ENCODE measurements at regions of chr11 and their contacts with region 1.

Region 1: DNA sequence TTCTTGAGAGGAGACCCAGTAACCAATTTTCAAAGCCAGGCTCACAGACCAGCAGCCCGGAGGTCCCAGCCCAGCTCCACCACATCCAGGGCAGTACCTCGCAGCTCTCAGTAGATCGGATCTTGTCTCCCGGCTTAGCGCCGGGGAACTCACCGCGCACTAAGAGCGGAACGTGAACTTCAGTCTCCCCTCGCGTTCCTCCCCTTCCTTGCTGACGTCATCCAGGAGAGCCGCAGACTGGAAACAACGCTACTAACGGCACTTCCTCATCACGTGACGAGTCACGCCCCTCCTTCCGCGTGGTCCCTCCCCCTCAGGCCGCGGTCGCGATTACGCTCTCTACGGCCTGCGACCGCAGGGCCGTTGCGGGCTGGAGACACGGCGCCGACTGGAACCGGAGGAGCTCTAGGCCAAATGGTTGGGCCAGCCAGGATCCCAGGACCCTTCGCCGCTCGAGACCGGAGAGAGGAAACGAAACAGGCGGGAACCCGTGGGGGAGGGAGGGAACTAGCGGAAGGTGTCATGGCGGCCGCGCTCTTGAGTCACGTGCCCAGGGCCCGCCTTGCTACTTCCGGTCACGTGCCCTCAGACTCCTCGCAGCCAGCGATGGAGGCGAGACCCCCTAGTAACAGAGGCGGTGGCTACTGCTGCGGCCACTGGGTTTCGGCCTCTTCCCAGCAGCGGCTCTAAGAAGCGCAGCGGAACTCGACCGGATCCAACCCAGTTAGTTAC is at the starts of genes GTF2H1 and HPS5:
- DNase-seq: peak; percentile 88 to 99 (median 98)
- ATAC-seq: peak; percentile 93
- H3K4me3 ChIP-seq: peak within 1 kb of the TSS; percentile 96
- H3K4me3 Mint-ChIP-seq: peak within 1 kb of the TSS; percentile 85 to 100 (median 94)
- H3K27ac ChIP-seq: peak within 1 kb of the TSS; percentile 97
- H3K27ac Mint-ChIP-seq: peak within 1 kb of the TSS; percentile 99 to 100 (median 100)
- H3K4me1 ChIP-seq: peaks cover 32 to 33% of the 10 kb centered on the region in 2 donors
- H3K4me1 Mint-ChIP-seq: peaks cover 53 to 91% (median 81%) of the 10 kb centered on the region in 7 donors
- H3K27me3 ChIP-seq: no peaks in the 10 kb centered on the region
- H3K27me3 Mint-ChIP-seq: peaks cover 0 to 2% (median 0%) of the 10 kb centered on the region in 5 donors
- total RNA-seq, gene GTF2H1: 26.3 to 63.2 (median 59.0) TPM
- total RNA-seq, gene HPS5: 13.0 to 22.3 (median 16.6) TPM

Region 2: DNA sequence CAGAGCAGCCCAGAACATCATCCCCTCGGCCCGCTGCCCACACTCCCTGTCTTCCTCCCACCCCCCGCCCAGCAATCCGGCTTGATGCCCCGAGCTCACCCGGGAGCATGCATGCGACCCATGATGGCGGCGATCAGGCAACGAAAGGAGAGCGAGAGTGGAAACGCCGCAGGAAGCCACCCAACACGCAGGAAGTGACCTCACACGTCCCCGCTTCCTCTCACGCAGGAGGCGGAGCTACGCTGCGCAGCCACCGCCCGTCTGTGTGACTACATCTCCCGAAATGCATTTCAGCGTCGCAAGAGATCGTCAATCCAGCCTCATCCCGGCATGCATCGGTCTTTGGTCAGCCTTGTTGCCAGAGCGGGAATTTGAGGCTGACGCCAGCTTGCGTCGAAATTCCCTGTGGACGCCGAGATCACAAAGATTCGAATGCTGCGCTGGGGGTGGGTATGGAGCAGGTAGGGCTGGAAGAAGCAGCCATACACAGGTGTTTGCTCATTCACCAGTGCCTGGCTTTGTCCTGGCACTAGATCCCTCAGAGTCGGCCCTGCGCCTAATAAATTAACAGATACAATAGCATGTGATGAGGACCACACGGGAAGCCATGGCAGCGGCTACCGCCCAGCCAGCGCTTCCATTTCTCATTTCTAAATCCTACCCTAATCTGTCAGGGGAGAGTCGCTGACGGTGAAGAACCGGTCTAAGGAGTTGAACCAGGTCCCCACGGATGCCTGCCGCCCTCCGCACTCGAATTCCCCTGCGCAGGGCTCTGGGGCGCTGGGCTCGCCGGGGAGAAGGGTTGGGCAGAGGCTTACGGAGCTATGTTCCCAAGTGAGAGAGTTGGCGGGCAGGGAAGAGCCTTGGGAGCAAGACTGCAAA is 1244.4 kb before region 1 on chr11 and contains the start of gene RPS13:
- CTCF ChIA-PET with region 1: no interaction called
- POLR2A ChIA-PET with region 1: no interaction called
- intact Hi-C with region 1: loop called in 1 of 2 experiments (anchors 2 kb)
- DNase-seq: peak; percentile 76 to 95 (median 93)
- ATAC-seq: peak; percentile 98
- H3K4me3 ChIP-seq: peak within 1 kb of the TSS; percentile 87
- H3K4me3 Mint-ChIP-seq: peak within 1 kb of the TSS; percentile 91 to 99 (median 98)
- H3K27ac ChIP-seq: peak within 1 kb of the TSS; percentile 91
- H3K27ac Mint-ChIP-seq: peak within 1 kb of the TSS; percentile 96 to 99 (median 99)
- H3K4me1 ChIP-seq: peaks cover 12 to 27% of the 10 kb centered on the region in 2 donors
- H3K4me1 Mint-ChIP-seq: peaks cover 25 to 60% (median 37%) of the 10 kb centered on the region in 7 donors
- H3K27me3 ChIP-seq: no peaks in the 10 kb centered on the region
- H3K27me3 Mint-ChIP-seq: no peaks in the 10 kb centered on the region
- total RNA-seq, gene RPS13: 1,062 to 2,591 (median 2,234) TPM

Region 3: GRCh38 chr11:18012863-18013781 is 309.0 kb before region 1 on chr11 and contains the start of gene SERGEF:
- CTCF ChIA-PET with region 1: no interaction called
- POLR2A ChIA-PET with region 1: no interaction called
- intact Hi-C with region 1: loop called (anchors 1 kb)
- DNase-seq: peak; percentile 81 to 96 (median 87)
- ATAC-seq: peak; percentile 93
- H3K4me3 ChIP-seq: peak within 1 kb of the TSS; percentile 85
- H3K4me3 Mint-ChIP-seq: peak within 1 kb of the TSS; percentile 93 to 100 (median 98)
- H3K27ac ChIP-seq: peak within 1 kb of the TSS; percentile 84
- H3K27ac Mint-ChIP-seq: peak within 1 kb of the TSS; percentile 89 to 99 (median 99)
- H3K4me1 ChIP-seq: peaks cover 10% of the 10 kb centered on the region in 2 donors
- H3K4me1 Mint-ChIP-seq: peaks cover 17 to 47% (median 37%) of the 10 kb centered on the region in 7 donors
- H3K27me3 ChIP-seq: no peaks in the 10 kb centered on the region
- H3K27me3 Mint-ChIP-seq: no peaks in the 10 kb centered on the region
- total RNA-seq, gene SERGEF: 35.0 to 57.7 (median 52.9) TPM

Region 4: GRCh38 chr11:18280438-18281045 is 41.6 kb before region 1 on chr11:
- CTCF ChIA-PET with region 1: no interaction called
- POLR2A ChIA-PET with region 1: no interaction called
- intact Hi-C with region 1: loop called in 1 of 2 experiments (anchors 2 kb)
- DNase-seq: no peak
- ATAC-seq: peak; percentile 53
- H3K4me3 ChIP-seq: no peak overlapping the region
- H3K4me3 Mint-ChIP-seq: peak overlapping the region in 1 of 10 donors; percentile 61
- H3K27ac ChIP-seq: no peak overlapping the region
- H3K27ac Mint-ChIP-seq: peak overlapping the region in 4 of 9 donors; percentile 58 to 85 (median 70)
- H3K4me1 ChIP-seq: no peaks in the 10 kb centered on the region
- H3K4me1 Mint-ChIP-seq: peaks cover 0 to 20% (median 4%) of the 10 kb centered on the region in 7 donors
- H3K27me3 ChIP-seq: no peaks in the 10 kb centered on the region
- H3K27me3 Mint-ChIP-seq: no peaks in the 10 kb centered on the region

Region 5: DNA sequence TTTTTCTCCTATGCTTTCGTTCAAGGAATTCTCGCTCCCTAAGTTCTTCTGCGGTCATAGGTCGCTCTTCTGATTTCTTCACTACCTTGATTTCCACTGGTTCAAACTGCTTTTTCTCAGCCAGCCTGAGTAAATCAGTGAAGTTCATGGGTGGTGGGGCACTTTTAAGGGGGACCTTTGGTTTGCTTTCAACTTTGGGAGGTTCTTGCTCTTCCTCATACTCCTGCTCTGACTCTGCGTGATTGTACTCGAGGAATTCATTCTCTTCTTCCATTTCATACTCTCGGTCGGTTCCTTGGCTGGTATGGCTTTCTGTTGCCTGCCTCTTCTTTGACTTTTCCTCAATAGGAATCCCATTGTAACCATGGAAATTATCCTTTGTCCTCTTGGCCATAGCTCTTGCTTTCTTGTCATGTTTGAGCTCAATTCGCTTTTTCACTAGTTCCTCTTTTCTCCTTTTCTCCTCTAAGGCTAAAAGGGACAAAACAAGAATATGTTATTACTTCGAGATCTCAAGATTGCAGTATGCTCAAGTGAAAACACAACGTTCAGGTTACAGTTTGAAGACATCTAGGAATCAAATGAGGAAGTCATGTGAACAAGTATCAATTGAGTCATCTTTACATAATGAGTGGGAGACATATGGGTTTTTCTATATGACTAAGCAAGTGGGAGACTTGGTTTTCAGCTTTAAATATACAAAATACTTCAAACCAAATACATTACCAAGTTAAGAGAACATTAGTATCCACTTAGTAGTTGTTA is 293.7 kb after region 1 on chr11:
- CTCF ChIA-PET with region 1: no interaction called
- POLR2A ChIA-PET with region 1: no interaction called
- intact Hi-C with region 1: loop called in 1 of 2 experiments (anchors 5 kb)
- DNase-seq: no peak
- ATAC-seq: peak; percentile 44
- H3K4me3 ChIP-seq: no peak overlapping the region
- H3K4me3 Mint-ChIP-seq: peak overlapping the region in 1 of 10 donors; percentile 71
- H3K27ac ChIP-seq: no peak overlapping the region
- H3K27ac Mint-ChIP-seq: peak overlapping the region in 3 of 9 donors; percentile 26 to 72 (median 28)
- H3K4me1 ChIP-seq: peaks cover 21 to 29% of the 10 kb centered on the region in 2 donors
- H3K4me1 Mint-ChIP-seq: peaks cover 26 to 59% (median 47%) of the 10 kb centered on the region in 7 donors
- H3K27me3 ChIP-seq: no peaks in the 10 kb centered on the region
- H3K27me3 Mint-ChIP-seq: no peaks in the 10 kb centered on the region

Region 6: DNA sequence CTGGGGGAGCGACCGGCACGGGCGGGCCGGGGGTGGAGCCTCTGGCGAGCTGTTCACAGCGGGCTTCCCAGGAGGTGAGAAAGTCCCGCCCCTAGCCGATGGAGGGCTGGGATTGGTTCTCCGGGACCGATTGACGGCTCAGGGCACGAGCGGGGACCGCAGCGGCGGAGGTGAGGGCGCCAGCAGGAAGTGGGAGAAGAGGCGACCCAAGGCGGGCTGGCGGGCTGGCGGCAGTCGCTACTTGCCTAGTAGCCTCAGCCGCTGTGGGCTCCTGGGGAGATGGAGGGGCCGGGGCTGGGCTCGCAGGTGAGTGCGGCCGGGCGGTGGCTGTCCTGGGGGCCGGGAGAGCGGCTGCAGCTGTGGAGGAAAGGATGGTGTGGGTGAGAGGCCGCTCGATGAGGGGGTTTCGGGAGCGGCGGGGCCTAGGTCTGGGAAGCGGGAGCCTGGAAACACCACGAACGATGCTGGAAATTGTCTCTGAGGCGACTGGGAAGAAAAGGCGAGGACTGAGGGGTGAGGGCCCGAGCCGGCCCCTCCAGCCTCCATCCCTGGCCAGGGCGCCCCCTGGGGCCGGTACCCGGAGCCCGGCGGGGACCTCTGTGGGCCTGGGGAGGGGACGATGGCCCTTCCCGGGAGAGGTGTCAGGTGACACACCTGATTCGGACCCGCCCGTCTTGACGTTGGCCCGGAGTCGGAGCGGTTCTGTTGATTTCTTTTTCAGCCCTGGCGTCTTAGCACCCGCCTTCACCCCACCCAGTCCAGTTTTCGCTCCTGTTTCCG is 795.0 kb after region 1 on chr11 and contains the start of gene ZDHHC13:
- CTCF ChIA-PET with region 1: no interaction called
- POLR2A ChIA-PET with region 1: no interaction called
- intact Hi-C with region 1: loop called in 1 of 2 experiments (anchors 10 kb)
- DNase-seq: peak; percentile 80 to 94 (median 92)
- ATAC-seq: peak; percentile 99
- H3K4me3 ChIP-seq: peak within 1 kb of the TSS; percentile 82
- H3K4me3 Mint-ChIP-seq: peak within 1 kb of the TSS; percentile 89 to 95 (median 93)
- H3K27ac ChIP-seq: peak within 1 kb of the TSS; percentile 73
- H3K27ac Mint-ChIP-seq: peak within 1 kb of the TSS; percentile 72 to 93 (median 89)
- H3K4me1 ChIP-seq: peaks cover 11 to 14% of the 10 kb centered on the region in 2 donors
- H3K4me1 Mint-ChIP-seq: peaks cover 35 to 57% (median 53%) of the 10 kb centered on the region in 7 donors
- H3K27me3 ChIP-seq: no peaks in the 10 kb centered on the region
- H3K27me3 Mint-ChIP-seq: peaks cover 0 to 17% (median 0%) of the 10 kb centered on the region in 5 donors
- total RNA-seq, gene ZDHHC13: 9.3 to 21.3 (median 14.2) TPM